Esophagus muscularis mucosa (tissue), 4 donors: ENCODE measurements at regions of chr2 and their contacts with region 1.

Region 1: DNA sequence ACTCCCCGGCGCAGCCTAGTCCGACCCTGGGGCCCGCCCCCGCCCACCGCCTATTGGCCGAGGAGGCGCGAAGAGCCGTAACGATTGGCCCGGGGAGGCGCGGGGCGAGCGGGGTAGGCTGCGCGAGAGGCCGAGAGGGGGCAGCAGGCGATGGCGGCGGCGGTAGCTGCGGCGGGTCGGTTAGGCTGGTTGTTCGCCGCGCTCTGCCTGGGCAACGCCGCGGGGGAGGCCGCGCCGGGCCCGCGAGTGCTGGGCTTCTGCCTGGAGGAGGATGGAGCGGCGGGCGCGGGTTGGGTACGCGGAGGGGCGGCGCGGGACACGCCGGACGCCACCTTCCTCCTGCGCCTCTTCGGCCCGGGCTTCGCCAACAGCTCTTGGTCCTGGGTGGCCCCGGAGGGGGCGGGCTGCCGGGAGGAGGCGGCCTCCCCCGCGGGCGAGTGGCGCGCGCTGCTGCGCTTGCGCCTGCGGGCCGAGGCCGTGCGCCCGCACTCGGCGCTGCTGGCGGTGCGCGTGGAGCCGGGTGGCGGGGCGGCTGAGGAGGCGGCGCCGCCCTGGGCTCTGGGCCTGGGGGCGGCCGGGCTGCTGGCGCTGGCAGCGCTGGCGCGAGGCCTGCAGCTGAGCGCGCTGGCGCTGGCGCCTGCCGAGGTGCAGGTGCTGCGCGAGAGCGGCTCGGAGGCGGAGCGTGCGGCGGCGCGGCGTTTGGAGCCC is at the start of gene CNNM3:
- DNase-seq: peak; percentile 99
- H3K4me3 ChIP-seq: peak within 1 kb of the TSS; percentile 69 to 98 (median 86)
- H3K27ac ChIP-seq: peak within 1 kb of the TSS; percentile 94 to 97 (median 96)
- H3K4me1 ChIP-seq: peaks cover 55 to 62% (median 58%) of the 10 kb centered on the region in 4 donors
- H3K27me3 ChIP-seq: no peaks in the 10 kb centered on the region
- CTCF ChIP-seq: peak; percentile 50 to 85 (median 56)
- EP300 ChIP-seq: no peak
- POLR2A ChIP-seq: peak; percentile 58
- total RNA-seq, gene CNNM3: 11.8 to 30.3 (median 22.1) TPM

Region 2: DNA sequence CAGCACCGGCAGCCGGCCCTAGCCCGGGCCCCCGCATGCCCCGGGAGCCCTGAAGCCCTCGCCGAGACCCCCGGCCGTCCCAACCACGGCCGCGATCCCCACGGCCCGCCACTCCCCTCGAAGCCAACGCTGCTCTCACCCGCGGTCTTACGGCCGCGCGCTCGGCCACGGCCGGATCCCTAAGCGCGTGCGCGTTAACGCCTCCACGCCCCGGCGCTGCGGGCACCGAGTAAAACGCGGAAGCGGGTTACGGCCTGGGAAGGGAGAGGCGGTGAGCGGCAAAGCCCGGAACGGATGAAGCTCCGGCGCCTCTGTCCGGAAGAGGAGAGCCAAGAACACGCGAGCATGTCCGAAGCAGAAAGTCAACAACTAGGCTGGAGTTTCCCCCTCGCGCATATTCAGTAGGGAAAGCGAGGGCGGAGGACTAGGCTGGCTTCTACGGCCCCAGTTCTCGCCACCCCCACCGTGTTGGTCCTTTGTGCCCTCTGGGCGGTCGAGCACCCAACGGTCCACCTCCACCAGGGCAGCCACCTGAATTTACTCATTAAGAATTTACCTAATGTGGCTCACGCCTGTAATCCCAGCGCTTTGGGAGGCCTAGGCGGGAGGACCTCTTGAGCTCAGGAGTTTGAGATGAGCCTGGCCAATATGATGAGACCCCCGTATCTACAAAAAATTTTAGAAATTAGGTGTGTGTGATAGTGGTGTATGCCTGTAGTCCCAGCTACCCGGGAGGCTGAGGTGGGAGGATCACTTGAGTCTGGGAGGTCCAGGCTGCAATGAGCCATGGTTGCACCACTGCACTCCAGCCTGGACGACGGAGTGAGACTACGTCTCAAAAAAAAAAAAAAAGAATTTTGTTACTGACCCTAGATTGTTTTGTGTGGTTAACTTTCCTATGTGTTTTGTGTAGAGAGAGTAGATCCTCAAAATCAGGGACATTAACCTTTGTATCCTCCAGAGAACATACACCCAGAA is 177.8 kb before region 1 on chr2 and contains the start of gene KANSL3:
- intact Hi-C with region 1: loop called (anchors 10 kb)
- DNase-seq: peak; percentile 96
- H3K4me3 ChIP-seq: peak within 1 kb of the TSS; percentile 64 to 83 (median 71)
- H3K27ac ChIP-seq: peak within 1 kb of the TSS; percentile 91 to 97 (median 94)
- H3K4me1 ChIP-seq: peaks cover 27 to 46% (median 43%) of the 10 kb centered on the region in 4 donors
- H3K27me3 ChIP-seq: no peaks in the 10 kb centered on the region
- CTCF ChIP-seq: peak in 1 of 3 experiments; percentile 40
- EP300 ChIP-seq: no peak
- POLR2A ChIP-seq: peak; percentile 98
- total RNA-seq, gene KANSL3: 54.2 to 63.1 (median 59.5) TPM

Region 3: DNA sequence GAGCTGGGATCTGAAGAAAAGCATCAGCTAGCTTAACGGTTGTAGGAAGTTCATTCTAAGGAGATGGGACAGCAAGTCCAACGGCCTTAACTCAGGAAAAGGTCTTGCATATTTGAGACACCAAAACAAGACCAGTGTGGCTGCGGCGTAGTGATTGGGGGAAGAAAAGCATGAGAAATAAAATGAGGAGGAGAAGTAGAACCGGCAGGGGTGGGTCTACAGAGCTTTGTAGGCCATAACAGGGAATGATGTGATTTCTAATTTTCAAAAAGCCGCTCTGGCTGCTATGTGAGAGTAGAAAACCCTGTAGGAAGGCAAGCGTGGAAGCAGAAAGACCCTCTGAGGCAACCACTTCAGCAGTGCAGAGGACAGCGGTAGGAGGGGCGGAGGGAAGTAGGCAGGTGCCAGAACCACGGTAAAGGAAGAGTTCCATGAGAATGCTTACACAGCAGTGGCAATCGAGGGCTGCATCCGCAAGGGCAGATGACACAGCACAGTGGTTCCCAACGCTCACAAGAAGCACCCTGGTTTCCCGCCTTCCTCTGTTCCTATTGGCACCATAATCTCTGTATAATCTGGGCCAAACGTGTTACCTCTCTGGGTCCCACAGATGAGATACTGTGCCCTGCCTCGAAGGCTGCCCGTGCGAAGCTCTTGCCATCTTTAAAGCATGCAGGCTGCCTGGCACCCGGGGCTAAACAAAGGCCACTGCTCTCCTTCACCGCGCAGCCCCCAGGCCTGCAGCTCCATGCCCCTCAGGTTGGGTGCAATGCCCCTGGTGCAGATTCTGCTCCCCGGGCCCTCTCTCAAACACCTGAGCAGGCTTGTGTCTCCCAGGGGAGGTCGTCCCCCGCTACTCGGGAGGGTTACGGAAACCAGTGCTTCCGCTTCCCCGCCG is 40.7 kb after region 1 on chr2:
- intact Hi-C with region 1: loop called (anchors 2 kb)
- DNase-seq: no peak
- H3K4me3 ChIP-seq: peak overlapping the region; percentile 65 to 82 (median 70)
- H3K27ac ChIP-seq: peak overlapping the region; percentile 84 to 100 (median 85)
- H3K4me1 ChIP-seq: peaks cover 35 to 66% (median 63%) of the 10 kb centered on the region in 4 donors
- H3K27me3 ChIP-seq: no peaks in the 10 kb centered on the region
- CTCF ChIP-seq: no peak
- EP300 ChIP-seq: no peak
- POLR2A ChIP-seq: no peak